ENCODE measurements at regions of chr11 and their contacts with region 1.

Region 1: DNA sequence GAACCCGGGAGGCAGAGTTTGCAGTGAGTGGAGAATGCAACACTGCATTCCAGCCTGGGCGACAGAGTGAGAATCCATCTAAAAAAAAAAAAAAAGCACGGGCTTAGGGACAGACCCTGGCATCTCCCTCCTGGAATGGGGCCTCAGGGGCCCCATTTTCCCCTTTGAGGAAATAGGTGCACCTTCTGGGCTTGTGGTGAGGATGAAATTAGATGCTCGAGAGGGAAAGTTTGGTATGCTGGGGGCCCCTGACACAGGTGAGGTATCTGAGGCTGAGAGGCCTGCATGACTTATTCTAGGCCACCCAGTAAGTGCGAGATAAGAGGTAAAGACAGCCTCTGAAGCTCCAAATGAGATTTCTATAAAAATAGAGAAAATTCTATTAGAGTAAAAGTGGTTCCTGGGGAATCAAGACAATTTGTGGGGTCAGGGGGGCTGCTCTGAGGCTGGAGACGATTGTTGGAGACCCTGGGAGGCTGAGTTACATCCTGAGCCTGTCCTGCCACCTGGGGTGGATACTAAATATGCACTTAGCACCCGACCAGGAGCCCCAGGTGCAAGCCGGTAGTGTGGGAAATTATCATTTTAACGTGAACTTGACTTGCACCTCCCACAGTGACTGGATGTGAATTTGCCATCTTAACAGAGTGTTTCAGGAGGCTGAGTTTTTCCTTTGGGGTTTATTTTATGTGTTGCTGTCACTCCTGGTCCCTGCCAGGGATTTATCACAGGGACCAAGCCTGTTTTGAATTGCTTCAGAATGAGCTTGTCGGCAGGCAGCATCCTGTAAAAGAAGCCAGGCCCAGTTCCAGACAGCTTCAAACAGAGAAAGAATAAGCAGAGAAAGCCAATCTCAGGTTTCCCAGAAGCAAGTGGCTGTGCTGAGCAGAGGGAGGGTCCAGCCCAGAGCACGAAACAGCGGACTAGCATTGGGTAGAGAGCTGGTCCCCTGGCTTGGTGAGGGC is 48.4 kb upstream of the TSKU start:
- DNase-seq: peak; percentile 46
- H3K4me3 ChIP-seq: no peak overlapping the region
- H3K27ac ChIP-seq: peak overlapping the region in 1 of 2 donors; percentile 44
- H3K4me1 ChIP-seq: peaks cover 15% of the 10 kb centered on the region
- H3K27me3 ChIP-seq: no peaks in the 10 kb centered on the region
- CTCF ChIP-seq: no peak
- POLR2A ChIP-seq: no peak

Region 2: GRCh38 chr11:76799066-76799804 is 64.5 kb after region 1 on chr11:
- intact Hi-C with region 1: loop called (anchors 2 kb)
- DNase-seq: peak; percentile 86
- H3K4me3 ChIP-seq: peak overlapping the region; percentile 37 to 42
- H3K27ac ChIP-seq: peak overlapping the region in 1 of 2 donors; percentile 74
- H3K4me1 ChIP-seq: peaks cover 13% of the 10 kb centered on the region
- H3K27me3 ChIP-seq: no peaks in the 10 kb centered on the region
- CTCF ChIP-seq: peak; percentile 84 to 93 (median 90)
- POLR2A ChIP-seq: no peak